B cell (primary cell): ENCODE measurements at regions of chr3 and their contacts with region 1.

Region 1: GRCh38 chr3:12562451-12562850 is 5.6 kb downstream of the MKRN2 start:
- DNase-seq: no peak
- ATAC-seq: no peak
- H3K4me3 ChIP-seq: no peak overlapping the region
- H3K4me3 Mint-ChIP-seq: no peak overlapping the region
- H3K27ac ChIP-seq: no peak overlapping the region
- H3K27ac Mint-ChIP-seq: no peak overlapping the region
- H3K4me1 ChIP-seq: peaks cover 24 to 30% of the 10 kb centered on the region in 2 donors
- H3K4me1 Mint-ChIP-seq: peaks cover 45% of the 10 kb centered on the region
- H3K27me3 ChIP-seq: no peaks in the 10 kb centered on the region
- H3K27me3 Mint-ChIP-seq: no peaks in the 10 kb centered on the region
- CTCF ChIP-seq: no peak

Region 2: GRCh38 chr3:12423918-12424630 is 138.4 kb before region 1 on chr3:
- CTCF ChIA-PET with region 1: no interaction called
- POLR2A ChIA-PET with region 1: no interaction called
- intact Hi-C with region 1: no loop called
- DNase-seq: no peak
- ATAC-seq: no peak
- H3K4me3 ChIP-seq: no peak overlapping the region
- H3K4me3 Mint-ChIP-seq: no peak overlapping the region
- H3K27ac ChIP-seq: no peak overlapping the region
- H3K27ac Mint-ChIP-seq: no peak overlapping the region
- H3K4me1 ChIP-seq: no peaks in the 10 kb centered on the region
- H3K4me1 Mint-ChIP-seq: no peaks in the 10 kb centered on the region
- H3K27me3 ChIP-seq: peaks cover 0 to 8% (median 0%) of the 10 kb centered on the region in 4 experiments
- H3K27me3 Mint-ChIP-seq: peaks cover 22% of the 10 kb centered on the region
- CTCF ChIP-seq: no peak

Region 3: DNA sequence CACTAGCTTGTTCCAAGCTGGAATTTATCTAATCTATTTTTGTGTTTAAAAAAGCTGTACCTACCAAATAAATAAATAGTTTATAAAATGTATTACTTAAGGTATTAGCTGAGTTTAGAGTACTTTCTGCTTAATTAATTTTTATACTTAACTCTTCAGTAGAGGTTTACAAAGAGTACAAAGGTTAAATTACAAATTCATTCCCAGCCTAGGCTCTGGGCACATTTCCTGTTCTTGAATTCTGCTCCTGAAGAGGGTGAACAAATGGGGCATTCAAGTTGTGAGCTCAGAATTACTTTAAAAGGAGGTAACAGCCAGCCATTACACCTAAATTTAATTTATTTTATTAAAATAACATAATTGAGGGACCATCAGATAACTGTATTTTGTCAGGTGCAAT is 20.8 kb after region 1 on chr3:
- CTCF ChIA-PET with region 1: interaction called, 5 read pairs
- POLR2A ChIA-PET with region 1: no interaction called
- intact Hi-C with region 1: loop called (anchors 2 kb)
- DNase-seq: no peak
- ATAC-seq: no peak
- H3K4me3 ChIP-seq: no peak overlapping the region
- H3K4me3 Mint-ChIP-seq: no peak overlapping the region
- H3K27ac ChIP-seq: no peak overlapping the region
- H3K27ac Mint-ChIP-seq: no peak overlapping the region
- H3K4me1 ChIP-seq: peaks cover 3 to 6% of the 10 kb centered on the region in 2 donors
- H3K4me1 Mint-ChIP-seq: peaks cover 13% of the 10 kb centered on the region
- H3K27me3 ChIP-seq: no peaks in the 10 kb centered on the region
- H3K27me3 Mint-ChIP-seq: no peaks in the 10 kb centered on the region
- CTCF ChIP-seq: no peak

Region 4: GRCh38 chr3:12601072-12601471 is 38.6 kb after region 1 on chr3:
- CTCF ChIA-PET with region 1: no interaction called
- POLR2A ChIA-PET with region 1: no interaction called
- intact Hi-C with region 1: no loop called
- DNase-seq: no peak
- ATAC-seq: no peak
- H3K4me3 ChIP-seq: no peak overlapping the region
- H3K4me3 Mint-ChIP-seq: no peak overlapping the region
- H3K27ac ChIP-seq: no peak overlapping the region
- H3K27ac Mint-ChIP-seq: no peak overlapping the region
- H3K4me1 ChIP-seq: no peaks in the 10 kb centered on the region
- H3K4me1 Mint-ChIP-seq: no peaks in the 10 kb centered on the region
- H3K27me3 ChIP-seq: no peaks in the 10 kb centered on the region
- H3K27me3 Mint-ChIP-seq: no peaks in the 10 kb centered on the region
- CTCF ChIP-seq: no peak